ENCODE measurements at regions of chr19 and their contacts with region 1.

Region 1: DNA sequence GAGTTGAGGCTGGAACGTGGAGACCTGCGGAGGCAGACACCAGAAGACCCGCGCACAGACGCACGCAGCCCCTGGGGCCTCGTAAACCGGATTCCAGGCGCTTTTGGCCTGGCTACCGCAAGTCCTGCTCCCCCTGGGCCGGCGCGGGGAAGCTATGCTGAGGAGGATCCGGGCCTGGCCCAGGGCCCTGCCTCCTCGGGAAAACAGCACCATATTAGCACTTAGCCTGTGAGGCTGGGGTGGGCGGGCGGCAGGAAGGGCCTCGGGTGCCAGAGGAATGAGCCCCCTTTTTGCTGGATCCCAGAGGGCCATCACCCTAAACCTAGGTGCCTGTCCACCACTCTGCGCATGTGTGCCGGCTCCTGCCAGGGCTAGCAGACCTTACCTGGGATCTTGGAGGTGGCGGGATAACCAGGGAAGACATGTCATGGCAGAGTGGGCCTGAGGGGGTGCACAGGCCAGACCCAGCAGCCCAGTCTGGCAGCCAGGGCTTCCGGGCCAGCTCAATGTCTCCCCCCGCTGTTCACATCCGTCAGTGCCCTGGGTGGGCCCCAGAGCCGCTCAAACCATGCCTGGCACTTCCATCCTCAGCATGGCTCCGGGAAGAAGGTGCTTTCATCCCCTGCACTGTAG is 7.3 kb downstream of the ELOF1 start:
- DNase-seq: no peak
- ATAC-seq: peak; percentile 76
- H3K4me3 ChIP-seq: no peak overlapping the region
- H3K27ac ChIP-seq: no peak overlapping the region
- H3K4me1 ChIP-seq: no peaks in the 10 kb centered on the region
- H3K27me3 ChIP-seq: no peaks in the 10 kb centered on the region
- CTCF ChIP-seq: no peak; the same call in 1 of the 2 replicates

Region 2: DNA sequence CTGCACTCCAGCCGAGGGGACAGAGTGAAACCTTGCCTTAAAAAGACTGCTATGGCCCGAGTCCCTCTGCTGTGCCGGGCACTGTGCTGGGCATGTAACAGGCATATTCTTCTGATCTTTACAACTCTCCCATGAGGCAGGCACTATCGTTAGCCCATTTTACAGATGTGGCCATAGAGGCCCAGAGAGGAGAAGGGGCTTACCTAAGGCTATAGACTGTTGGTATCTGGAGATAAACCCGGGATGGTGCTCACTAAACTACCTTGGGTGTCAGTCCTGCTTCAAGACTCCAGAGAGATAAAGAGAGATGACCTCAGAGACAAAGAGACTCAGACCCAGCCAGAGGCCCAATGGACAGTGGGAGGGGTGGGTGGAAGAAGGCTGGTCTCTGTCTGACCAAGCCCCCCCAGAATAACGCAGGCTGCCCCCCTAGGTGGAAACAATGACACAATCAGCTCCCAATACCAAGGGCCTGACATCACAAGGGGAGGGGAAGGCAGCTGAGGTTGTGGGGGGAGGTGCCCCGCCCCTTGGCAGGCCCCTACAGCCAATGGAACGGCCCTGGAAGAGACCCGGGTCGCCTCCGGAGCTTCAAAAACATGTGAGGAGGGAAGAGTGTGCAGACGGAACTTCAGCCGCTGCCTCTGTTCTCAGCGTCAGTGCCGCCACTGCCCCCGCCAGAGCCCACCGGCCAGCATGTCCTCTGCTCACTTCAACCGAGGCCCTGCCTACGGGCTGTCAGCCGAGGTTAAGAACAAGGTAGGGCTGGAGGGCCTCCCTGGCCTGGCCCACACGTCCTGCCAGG is 13.3 kb before region 1 on chr19 and contains the start of gene CNN1:
- CTCF ChIA-PET with region 1: interaction called, 6 read pairs
- POLR2A ChIA-PET with region 1: interaction called, 13 read pairs
- in situ Hi-C with region 1: no loop called
- intact Hi-C with region 1: no loop called
- DNase-seq: no peak
- ATAC-seq: 0 out of 2 replicates have a peak, but pooled peaks have one; percentile 23
- H3K4me3 ChIP-seq: peak within 1 kb of the TSS in 1 of 2 experiments; percentile 18; a peak in 1 of 4 replicates
- H3K27ac ChIP-seq: no peak within 1 kb of the TSS
- H3K4me1 ChIP-seq: no peaks in the 10 kb centered on the region; the same call in none of the 2 replicates
- H3K27me3 ChIP-seq: no peaks in the 10 kb centered on the region
- CTCF ChIP-seq: no peak
- total RNA-seq, gene CNN1: 0.98 TPM